RWPE1 (cell line): ENCODE measurements at regions of chr10 and their contacts with region 1.

Region 1: DNA sequence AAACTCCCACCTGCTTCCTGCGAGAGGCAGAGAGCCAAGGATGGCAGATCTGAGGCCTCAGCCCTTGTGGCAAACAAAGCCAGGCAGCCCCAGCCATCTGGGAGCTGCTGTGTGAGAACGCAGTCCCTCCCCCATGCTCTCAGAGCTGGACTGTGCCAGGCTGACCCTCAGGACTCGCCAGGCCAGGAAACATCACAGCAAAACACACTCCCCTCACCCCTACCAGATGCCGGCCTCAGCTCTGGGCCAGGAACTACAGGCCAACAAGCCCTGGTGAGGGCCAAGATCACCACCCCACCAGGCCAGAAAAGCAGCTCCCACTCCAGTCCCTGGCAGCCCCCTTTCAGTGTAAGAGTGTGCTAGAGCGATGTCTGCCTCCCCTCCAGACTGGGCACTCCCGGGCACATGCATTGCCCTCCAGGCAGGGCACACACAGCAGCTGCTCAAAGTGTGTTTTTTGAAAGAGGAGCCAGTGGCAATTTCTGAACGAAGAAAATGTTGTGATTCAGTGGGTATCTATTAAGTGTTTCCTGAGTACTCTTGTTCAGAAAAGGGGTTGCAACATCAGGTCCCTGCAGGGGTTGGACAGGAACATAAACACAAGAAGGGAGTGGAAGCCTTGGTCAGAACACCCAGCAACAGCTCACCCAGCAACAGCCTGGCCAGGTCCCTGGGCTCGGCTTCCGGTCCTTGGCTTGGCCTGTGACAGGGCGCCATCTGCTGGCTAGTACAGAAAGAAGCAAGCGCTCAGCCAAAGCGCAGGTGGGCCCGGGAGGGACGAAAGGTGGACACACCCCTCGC is 18.3 kb downstream of the LRRC20 start:
- DNase-seq: peak; percentile 95
- H3K27ac ChIP-seq: peak overlapping the region; percentile 99
- CTCF ChIP-seq: peak; percentile 88

Region 2: DNA sequence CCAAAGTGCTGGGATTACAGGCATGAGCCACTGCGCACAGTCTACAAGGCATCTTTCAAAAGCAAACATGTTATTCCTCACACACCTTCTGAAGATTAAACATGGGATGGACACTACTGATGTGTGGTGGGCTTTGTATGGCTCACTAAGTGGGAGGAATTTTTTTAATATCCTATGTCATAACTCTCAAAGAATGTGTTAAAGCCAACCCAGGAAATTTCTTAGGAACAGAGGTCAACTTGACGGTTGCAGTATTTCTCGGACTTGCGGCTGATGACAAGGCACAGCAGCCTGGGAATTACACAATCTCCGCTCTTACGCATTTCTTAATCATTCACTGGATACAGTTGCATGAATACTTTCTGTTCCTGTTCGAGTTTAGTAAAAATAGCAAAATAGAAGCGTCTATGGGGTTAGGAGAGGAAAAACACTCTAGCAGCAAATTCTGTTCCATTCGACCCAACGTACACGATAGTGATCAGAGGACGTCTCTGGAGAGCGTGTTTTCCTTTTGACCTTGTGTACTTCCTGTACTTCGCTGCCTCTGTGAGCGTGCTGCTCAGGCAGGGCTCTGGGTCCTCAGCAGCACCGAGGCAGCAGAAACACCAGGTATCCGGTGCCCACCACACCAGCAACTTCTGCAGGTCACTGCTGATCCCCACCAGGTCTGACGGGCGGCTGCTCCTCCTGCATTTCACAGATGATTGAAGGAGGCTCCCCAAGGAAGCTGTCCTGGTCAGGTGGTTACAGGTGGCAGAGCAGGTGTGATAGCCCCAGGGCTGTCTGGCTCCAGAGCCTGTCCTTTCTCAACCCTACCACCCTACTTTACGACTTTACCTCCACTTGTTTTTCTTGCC is 1302.6 kb before region 1 on chr10:
- CTCF ChIA-PET with region 1: no interaction called
- POLR2A ChIA-PET with region 1: no interaction called
- DNase-seq: peak; percentile 91
- H3K27ac ChIP-seq: peak overlapping the region; percentile 96
- CTCF ChIP-seq: no peak

Region 3: GRCh38 chr10:70227548-70228320 is 136.4 kb before region 1 on chr10:
- CTCF ChIA-PET with region 1: interaction called, 84 read pairs
- POLR2A ChIA-PET with region 1: no interaction called
- DNase-seq: no peak
- H3K27ac ChIP-seq: peak overlapping the region; percentile 35; the same call in 1 of the 2 replicates
- CTCF ChIP-seq: no peak

Region 4: GRCh38 chr10:70272925-70273316 is 91.2 kb before region 1 on chr10:
- CTCF ChIA-PET with region 1: interaction called, 17 read pairs
- POLR2A ChIA-PET with region 1: no interaction called
- DNase-seq: peak; percentile 58
- H3K27ac ChIP-seq: no peak overlapping the region
- CTCF ChIP-seq: peak; percentile 57

Region 5: GRCh38 chr10:70374775-70375614 is 10.8 kb after region 1 on chr10:
- CTCF ChIA-PET with region 1: interaction called, 30 read pairs
- POLR2A ChIA-PET with region 1: no interaction called
- DNase-seq: no peak
- H3K27ac ChIP-seq: peak overlapping the region; percentile 16; the same call in 1 of the 2 replicates
- CTCF ChIP-seq: no peak